ENCODE measurements at regions of chr6 and their contacts with region 1.

Region 1: GRCh38 chr6:89494131-89494796 is 61.3 kb downstream of the ANKRD6 start:
- DNase-seq: no peak
- H3K4me3 ChIP-seq: no peak overlapping the region
- H3K27ac ChIP-seq: no peak overlapping the region
- H3K4me1 ChIP-seq: no peaks in the 10 kb centered on the region
- H3K27me3 ChIP-seq: no peaks in the 10 kb centered on the region
- CTCF ChIP-seq: no peak
- EP300 ChIP-seq: no peak
- POLR2A ChIP-seq: no peak

Region 2: GRCh38 chr6:89527634-89528033 is 33.4 kb after region 1 on chr6:
- intact Hi-C with region 1: no loop called
- DNase-seq: no peak
- H3K4me3 ChIP-seq: no peak overlapping the region
- H3K27ac ChIP-seq: no peak overlapping the region
- H3K4me1 ChIP-seq: peaks cover 8% of the 10 kb centered on the region
- H3K27me3 ChIP-seq: no peaks in the 10 kb centered on the region
- CTCF ChIP-seq: no peak
- EP300 ChIP-seq: no peak
- POLR2A ChIP-seq: no peak

Region 3: GRCh38 chr6:90212274-90212673 is 718.0 kb after region 1 on chr6:
- intact Hi-C with region 1: no loop called
- DNase-seq: no peak
- H3K4me3 ChIP-seq: no peak overlapping the region
- H3K27ac ChIP-seq: no peak overlapping the region
- H3K4me1 ChIP-seq: peaks cover 13% of the 10 kb centered on the region
- H3K27me3 ChIP-seq: no peaks in the 10 kb centered on the region
- CTCF ChIP-seq: no peak
- EP300 ChIP-seq: no peak
- POLR2A ChIP-seq: no peak

Region 4: DNA sequence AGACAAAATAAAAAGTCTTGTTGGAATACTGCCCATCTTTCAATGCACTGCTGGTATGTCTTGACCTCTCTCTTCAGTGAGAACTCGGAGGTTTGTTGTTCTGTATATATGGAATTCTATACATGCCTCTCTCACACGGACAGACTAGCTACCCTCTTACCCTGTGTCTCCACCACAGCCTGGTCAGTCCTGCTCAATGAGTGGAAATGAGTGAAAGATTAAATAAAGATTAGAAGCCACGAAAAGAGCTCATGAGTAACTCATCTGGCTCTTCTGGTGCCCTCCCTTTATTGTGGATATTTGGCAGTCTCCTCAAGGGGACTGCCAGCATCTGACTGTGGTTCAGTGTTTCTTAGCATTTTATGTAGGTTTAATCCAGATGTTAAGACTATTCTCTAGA is 1355.4 kb after region 1 on chr6:
- intact Hi-C with region 1: loop called in 1 of 4 experiments (anchors 5 kb)
- DNase-seq: no peak
- H3K4me3 ChIP-seq: no peak overlapping the region
- H3K27ac ChIP-seq: no peak overlapping the region
- H3K4me1 ChIP-seq: peaks cover 2% of the 10 kb centered on the region
- H3K27me3 ChIP-seq: no peaks in the 10 kb centered on the region
- CTCF ChIP-seq: no peak
- EP300 ChIP-seq: no peak
- POLR2A ChIP-seq: no peak

Measured in ovary (tissue), 10 donors.